Lower leg skin (tissue), 4 donors: ENCODE measurements at regions of chrX and their contacts with region 1.

Region 1: GRCh38 chrX:40484408-40485091 is 96.2 kb upstream of the ATP6AP2 start:
- DNase-seq: no peak
- H3K4me3 ChIP-seq: no peak overlapping the region
- CTCF ChIP-seq: no peak
- POLR2A ChIP-seq: no peak

Region 2: GRCh38 chrX:39158801-39159657 is 1325.5 kb before region 1 on chrX:
- intact Hi-C with region 1: loop called (anchors 5 kb)
- DNase-seq: peak in 1 of 2 donors; percentile 26
- H3K4me3 ChIP-seq: no peak overlapping the region
- CTCF ChIP-seq: no peak
- POLR2A ChIP-seq: no peak

Region 3: GRCh38 chrX:40284852-40285251 is 199.7 kb before region 1 on chrX:
- intact Hi-C with region 1: loop called (anchors 5 kb)
- DNase-seq: no peak
- H3K4me3 ChIP-seq: no peak overlapping the region
- CTCF ChIP-seq: no peak
- POLR2A ChIP-seq: no peak